ENCODE measurements at regions of chr2 and their contacts with region 1.

Region 1: GRCh38 chr2:239882331-239882732 is 142.8 kb downstream of the NDUFA10 start:
- DNase-seq: peak; percentile 66
- H3K4me3 ChIP-seq: no peak overlapping the region
- H3K27ac ChIP-seq: no peak overlapping the region
- H3K4me1 ChIP-seq: peaks cover 0 to 7% (median 0%) of the 10 kb centered on the region in 4 donors
- H3K27me3 ChIP-seq: no peaks in the 10 kb centered on the region
- CTCF ChIP-seq: peak; percentile 64 to 74 (median 67)
- EP300 ChIP-seq: no peak
- POLR2A ChIP-seq: no peak

Region 2: GRCh38 chr2:239267288-239267951 is 614.9 kb before region 1 on chr2:
- in situ Hi-C with region 1: loop called in 1 of 4 experiments (anchors 25 kb)
- intact Hi-C with region 1: no loop called
- DNase-seq: peak; percentile 89
- H3K4me3 ChIP-seq: peak overlapping the region in 2 of 4 donors; percentile 13 to 27
- H3K27ac ChIP-seq: peak overlapping the region; percentile 86 to 92 (median 88)
- H3K4me1 ChIP-seq: peaks cover 56 to 79% (median 69%) of the 10 kb centered on the region in 4 donors
- H3K27me3 ChIP-seq: no peaks in the 10 kb centered on the region
- CTCF ChIP-seq: peak in 4 of 5 experiments; percentile 31 to 65 (median 40)
- EP300 ChIP-seq: no peak
- POLR2A ChIP-seq: peak; percentile 74

Region 3: DNA sequence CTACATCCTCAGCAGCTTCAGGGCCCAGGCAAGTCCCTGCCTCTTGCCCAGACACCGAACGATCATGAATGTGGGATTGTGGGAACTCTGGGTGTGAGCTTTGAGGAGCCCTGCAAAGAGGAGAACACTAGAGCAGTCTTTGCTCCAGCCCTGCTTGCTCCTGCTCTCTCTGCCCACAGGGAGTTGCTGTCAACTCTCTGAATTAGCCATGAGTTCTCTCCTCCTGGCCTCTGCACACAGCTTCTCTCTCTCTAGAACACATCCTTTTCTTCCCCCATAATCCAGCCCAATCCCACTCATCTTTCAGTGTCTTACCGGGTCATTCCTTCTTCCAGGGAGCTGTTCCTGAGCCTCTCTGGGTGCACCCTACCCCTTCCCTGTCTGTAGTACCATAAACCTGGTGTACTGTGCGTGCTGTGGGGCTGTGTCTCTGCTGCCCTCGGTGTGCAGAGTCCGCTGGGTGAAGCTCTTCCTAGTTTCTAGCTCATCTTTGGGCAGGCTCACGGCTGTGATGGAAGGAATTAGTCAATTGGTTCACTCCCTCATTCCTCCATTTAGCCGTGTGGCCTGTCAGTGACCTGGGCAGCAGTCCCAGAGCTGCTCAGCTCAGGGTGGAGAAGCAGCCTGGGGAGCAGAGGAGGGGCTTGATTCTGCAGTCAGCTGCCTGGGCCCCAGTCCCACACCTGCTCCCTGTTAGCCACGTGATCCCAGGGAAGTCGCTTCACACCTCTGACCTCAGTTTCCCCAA is 348.6 kb before region 1 on chr2:
- in situ Hi-C with region 1: no loop called
- intact Hi-C with region 1: no loop called
- DNase-seq: no peak
- H3K4me3 ChIP-seq: no peak overlapping the region
- H3K27ac ChIP-seq: no peak overlapping the region
- H3K4me1 ChIP-seq: no peaks in the 10 kb centered on the region
- H3K27me3 ChIP-seq: no peaks in the 10 kb centered on the region
- CTCF ChIP-seq: no peak
- EP300 ChIP-seq: no peak
- POLR2A ChIP-seq: no peak

Measured in transverse colon (tissue), 4 donors.